Activated B cell treated with CpG ODN at 0.5 μM for 24 hours (primary cell): ENCODE measurements at regions of chr12 and their contacts with region 1.

Region 1: DNA sequence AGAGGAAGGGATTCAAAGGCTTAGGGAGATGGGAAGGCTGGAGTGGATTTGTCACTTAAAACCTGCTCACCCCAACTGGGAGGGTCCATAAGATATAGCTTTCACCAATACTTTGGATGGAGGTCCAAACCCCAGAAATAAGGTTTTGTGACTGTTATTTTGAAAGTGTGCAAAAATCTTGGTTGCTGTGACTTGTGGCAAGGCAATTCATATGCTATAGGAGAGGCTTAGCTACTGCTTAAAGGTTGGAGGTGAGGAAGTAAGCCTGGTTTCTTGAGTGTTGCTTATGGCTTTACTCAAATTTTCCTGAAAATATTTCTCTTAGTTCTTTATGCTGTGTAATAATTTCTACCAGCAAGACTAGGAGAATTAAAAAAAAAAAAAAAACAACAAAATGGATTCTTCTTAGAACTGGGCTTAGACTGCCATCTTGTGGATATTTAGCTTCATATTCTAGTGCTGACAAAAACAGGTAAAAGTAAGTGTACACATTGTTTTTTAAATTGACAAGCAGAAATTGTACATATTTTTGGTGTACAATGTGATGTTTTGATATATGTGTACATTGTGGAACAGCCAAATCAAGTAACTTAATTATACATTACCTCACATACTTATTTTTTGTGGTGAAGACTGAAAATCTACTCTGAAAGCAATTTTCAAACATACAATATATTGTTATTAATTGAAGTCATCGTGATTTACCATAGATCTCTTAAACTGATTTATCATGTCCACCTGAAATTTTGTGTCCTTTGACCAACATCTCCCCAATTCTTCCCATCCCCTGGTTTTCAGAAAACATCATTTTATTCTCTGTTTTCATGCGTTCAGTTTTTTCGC is 23.0 kb downstream of the PDE6H start:
- DNase-seq: no peak
- ATAC-seq: peak; percentile 35
- H3K4me3 Mint-ChIP-seq: no peak overlapping the region
- H3K27ac Mint-ChIP-seq: peak overlapping the region; percentile 24
- H3K4me1 Mint-ChIP-seq: peaks cover 48% of the 10 kb centered on the region
- H3K27me3 Mint-ChIP-seq: peaks cover 9% of the 10 kb centered on the region
- CTCF ChIP-seq: peak; percentile 46

Region 2: DNA sequence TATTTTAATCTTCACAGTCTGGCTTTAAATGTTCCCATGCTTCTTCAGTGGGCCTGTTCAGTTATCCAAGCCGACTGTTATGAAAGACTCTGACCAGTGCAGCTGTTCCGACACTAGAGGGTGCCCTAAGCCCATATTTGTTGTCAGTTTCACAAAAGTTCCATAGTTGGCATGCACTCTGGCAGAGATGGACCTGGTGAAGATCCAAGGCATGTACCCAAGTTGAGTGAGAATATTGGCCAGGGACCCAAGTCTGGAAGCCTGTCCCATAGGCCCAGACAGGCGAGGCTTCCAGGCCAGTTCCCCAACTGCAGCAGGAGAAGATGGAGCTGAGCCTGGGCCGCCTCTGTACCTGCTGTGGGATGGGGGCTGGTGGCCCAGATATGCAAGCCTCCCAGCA is 272.0 kb before region 1 on chr12:
- CTCF ChIA-PET with region 1: interaction called, 20 read pairs
- POLR2A ChIA-PET with region 1: interaction called, 4 read pairs
- intact Hi-C with region 1: loop called (anchors 1 kb)
- DNase-seq: no peak
- ATAC-seq: peak; percentile 76
- H3K4me3 Mint-ChIP-seq: no peak overlapping the region
- H3K27ac Mint-ChIP-seq: no peak overlapping the region
- H3K4me1 Mint-ChIP-seq: no peaks in the 10 kb centered on the region
- H3K27me3 Mint-ChIP-seq: peaks cover 11% of the 10 kb centered on the region
- CTCF ChIP-seq: peak; percentile 25

Region 3: GRCh38 chr12:14810953-14811483 is 184.8 kb before region 1 on chr12:
- CTCF ChIA-PET with region 1: interaction called, 13 read pairs
- POLR2A ChIA-PET with region 1: no interaction called
- intact Hi-C with region 1: no loop called
- DNase-seq: no peak
- ATAC-seq: peak; percentile 37
- H3K4me3 Mint-ChIP-seq: peak overlapping the region; percentile 13
- H3K27ac Mint-ChIP-seq: peak overlapping the region; percentile 42
- H3K4me1 Mint-ChIP-seq: peaks cover 17% of the 10 kb centered on the region
- H3K27me3 Mint-ChIP-seq: no peaks in the 10 kb centered on the region
- CTCF ChIP-seq: no peak

Region 4: GRCh38 chr12:14948672-14949071 is 47.1 kb before region 1 on chr12:
- CTCF ChIA-PET with region 1: interaction called, 16 read pairs
- POLR2A ChIA-PET with region 1: interaction called, 6 read pairs
- intact Hi-C with region 1: loop called (anchors 1 kb)
- DNase-seq: no peak
- ATAC-seq: peak; percentile 91
- H3K4me3 Mint-ChIP-seq: peak overlapping the region; percentile 71
- H3K27ac Mint-ChIP-seq: peak overlapping the region; percentile 96
- H3K4me1 Mint-ChIP-seq: peaks cover 82% of the 10 kb centered on the region
- H3K27me3 Mint-ChIP-seq: no peaks in the 10 kb centered on the region
- CTCF ChIP-seq: no peak

Region 5: DNA sequence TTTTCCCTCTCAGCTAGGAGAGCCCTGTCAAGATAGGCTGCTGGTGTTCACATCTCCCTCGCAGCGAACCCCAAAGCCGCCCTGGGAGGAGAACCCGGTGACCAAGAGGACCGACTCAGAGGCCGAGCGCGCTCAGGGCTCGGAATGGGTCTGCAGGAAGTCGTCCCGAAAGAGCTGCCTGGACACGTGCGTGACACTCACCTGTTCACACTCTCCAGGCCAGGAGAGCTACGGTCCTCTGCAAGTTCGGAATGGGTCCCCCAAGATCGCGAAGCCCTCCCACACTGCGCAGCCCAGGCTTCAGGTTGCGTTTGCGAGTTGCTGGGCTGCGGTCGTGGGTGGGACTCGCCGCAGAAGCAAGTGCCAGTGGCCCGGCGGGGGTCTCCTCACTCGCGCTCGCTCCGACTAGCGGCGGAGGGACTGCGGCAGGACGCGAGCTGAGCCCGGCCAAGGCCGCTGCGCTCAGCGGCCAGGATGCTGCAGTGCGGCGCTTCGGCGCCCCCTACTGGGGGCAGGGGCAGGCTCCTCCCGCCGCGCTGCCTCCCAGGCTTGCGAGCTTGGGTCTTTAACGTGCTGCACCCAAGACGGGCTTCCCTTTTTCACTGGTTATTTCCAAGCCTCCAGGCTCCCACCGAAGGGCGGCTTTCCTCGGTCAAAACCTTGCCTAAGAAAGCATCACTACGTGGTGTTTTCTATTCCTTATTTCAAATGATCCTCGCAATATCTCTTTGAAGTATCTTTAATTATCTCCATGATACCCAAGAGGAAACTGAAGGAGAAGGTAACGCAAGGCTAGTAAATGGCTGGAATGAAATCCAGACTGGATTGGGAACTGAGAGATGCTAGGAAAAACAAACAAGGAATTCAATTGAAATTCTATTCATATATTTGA is 225.4 kb after region 1 on chr12 and contains the start of gene RERG:
- CTCF ChIA-PET with region 1: interaction called, 3 read pairs
- POLR2A ChIA-PET with region 1: no interaction called
- intact Hi-C with region 1: loop called (anchors 2 kb)
- DNase-seq: peak; percentile 72
- ATAC-seq: peak; percentile 99
- H3K4me3 Mint-ChIP-seq: peak within 1 kb of the TSS; percentile 68
- H3K27ac Mint-ChIP-seq: no peak within 1 kb of the TSS
- H3K4me1 Mint-ChIP-seq: peaks cover 7% of the 10 kb centered on the region
- H3K27me3 Mint-ChIP-seq: peaks cover 33% of the 10 kb centered on the region
- CTCF ChIP-seq: peak; percentile 69
- total RNA-seq, gene RERG: not detected in 2 replicates